Activated CD4-positive, alpha-beta memory T cell treated with anti-CD3 and anti-CD28 coated beads, Interleukin-2, amount 10 ng/mL, durations not matched to agents 7 days and 5 days (primary cell): ENCODE measurements at regions of chr16 and their contacts with region 1.

Region 1: DNA sequence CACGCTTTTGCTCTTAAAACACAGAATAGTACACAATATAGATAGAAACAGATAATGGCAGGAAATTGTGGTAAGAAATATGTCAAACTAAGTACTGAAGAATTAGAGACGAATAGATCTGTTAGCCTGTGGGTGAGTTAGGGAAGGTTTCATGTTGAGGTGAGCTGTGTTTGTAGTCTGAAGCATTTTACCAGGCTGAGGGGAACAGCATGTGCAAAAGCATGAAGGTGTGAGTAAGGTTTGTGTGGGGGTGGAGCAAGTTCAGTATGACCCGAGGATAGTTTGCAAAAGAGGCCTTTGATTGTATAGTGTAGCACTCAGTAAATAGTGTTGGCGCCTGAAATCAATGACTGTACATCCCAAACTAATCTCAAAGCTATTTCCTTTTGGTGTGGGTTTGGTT is 13.8 kb downstream of the IGSF6 start:
- DNase-seq: no peak
- H3K4me3 Mint-ChIP-seq: no peak overlapping the region
- H3K27ac Mint-ChIP-seq: peak overlapping the region; percentile 82
- H3K4me1 Mint-ChIP-seq: peaks cover 23% of the 10 kb centered on the region
- H3K27me3 Mint-ChIP-seq: no peaks in the 10 kb centered on the region

Region 2: GRCh38 chr16:21584817-21585216 is 53.8 kb before region 1 on chr16:
- CTCF ChIA-PET with region 1: interaction called, 48 read pairs
- POLR2A ChIA-PET with region 1: interaction called, 3 read pairs
- DNase-seq: no peak
- H3K4me3 Mint-ChIP-seq: no peak overlapping the region
- H3K27ac Mint-ChIP-seq: no peak overlapping the region
- H3K4me1 Mint-ChIP-seq: peaks cover 2% of the 10 kb centered on the region
- H3K27me3 Mint-ChIP-seq: no peaks in the 10 kb centered on the region

Region 3: GRCh38 chr16:21626659-21627277 is 11.8 kb before region 1 on chr16:
- CTCF ChIA-PET with region 1: interaction called, 5 read pairs
- POLR2A ChIA-PET with region 1: interaction called, 11 read pairs
- DNase-seq: peak; percentile 43
- H3K4me3 Mint-ChIP-seq: no peak overlapping the region
- H3K27ac Mint-ChIP-seq: peak overlapping the region; percentile 69
- H3K4me1 Mint-ChIP-seq: peaks cover 49% of the 10 kb centered on the region
- H3K27me3 Mint-ChIP-seq: no peaks in the 10 kb centered on the region

Region 4: DNA sequence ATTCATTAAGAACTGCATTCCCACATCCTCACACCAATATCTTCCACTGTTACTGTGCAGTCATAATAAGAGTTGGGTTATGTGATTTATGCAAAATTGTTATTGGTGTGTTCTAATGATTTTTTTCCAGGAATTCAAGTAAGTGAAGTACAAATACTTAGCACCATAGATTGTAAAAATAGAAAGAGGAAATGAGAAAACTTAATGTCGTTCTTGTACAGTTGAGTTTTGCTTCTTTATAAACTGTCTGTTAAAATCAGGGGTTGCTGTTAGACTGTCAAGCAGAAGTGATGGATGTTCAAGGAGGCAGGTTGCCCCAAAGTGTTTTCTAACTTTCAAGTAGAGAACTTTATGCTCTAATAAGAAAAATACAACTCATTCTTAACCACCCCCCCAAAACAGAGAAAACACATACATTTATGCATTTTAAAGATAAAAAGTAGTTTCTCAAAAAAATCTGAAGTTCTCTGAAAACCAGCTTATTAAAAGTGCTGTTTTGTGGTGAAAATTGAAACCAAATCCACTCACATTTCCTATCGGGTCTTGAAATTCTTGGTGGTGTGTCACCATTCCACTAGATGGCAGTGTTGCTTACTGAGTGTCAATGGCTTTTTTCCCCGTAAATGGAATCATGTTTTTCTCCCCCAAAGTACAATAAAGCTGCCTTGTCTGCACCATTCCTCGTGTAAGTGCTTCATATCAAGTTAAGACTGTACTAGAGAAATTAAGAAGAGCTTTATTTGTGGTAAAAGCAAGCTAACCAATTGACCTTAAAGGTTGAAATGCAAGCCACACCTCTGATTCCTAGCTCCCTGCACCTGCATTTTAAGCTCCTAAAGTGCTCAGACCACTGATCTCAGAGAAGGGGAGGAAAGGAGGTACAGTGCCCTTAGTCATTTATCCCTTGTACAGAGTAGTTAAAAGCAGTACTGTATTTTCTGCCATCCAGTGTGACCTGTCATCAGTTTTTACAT is 18.5 kb after region 1 on chr16:
- CTCF ChIA-PET with region 1: interaction called, 20 read pairs
- POLR2A ChIA-PET with region 1: no interaction called
- DNase-seq: peak; percentile 34
- H3K4me3 Mint-ChIP-seq: no peak overlapping the region
- H3K27ac Mint-ChIP-seq: no peak overlapping the region
- H3K4me1 Mint-ChIP-seq: peaks cover 45% of the 10 kb centered on the region
- H3K27me3 Mint-ChIP-seq: no peaks in the 10 kb centered on the region

Region 5: DNA sequence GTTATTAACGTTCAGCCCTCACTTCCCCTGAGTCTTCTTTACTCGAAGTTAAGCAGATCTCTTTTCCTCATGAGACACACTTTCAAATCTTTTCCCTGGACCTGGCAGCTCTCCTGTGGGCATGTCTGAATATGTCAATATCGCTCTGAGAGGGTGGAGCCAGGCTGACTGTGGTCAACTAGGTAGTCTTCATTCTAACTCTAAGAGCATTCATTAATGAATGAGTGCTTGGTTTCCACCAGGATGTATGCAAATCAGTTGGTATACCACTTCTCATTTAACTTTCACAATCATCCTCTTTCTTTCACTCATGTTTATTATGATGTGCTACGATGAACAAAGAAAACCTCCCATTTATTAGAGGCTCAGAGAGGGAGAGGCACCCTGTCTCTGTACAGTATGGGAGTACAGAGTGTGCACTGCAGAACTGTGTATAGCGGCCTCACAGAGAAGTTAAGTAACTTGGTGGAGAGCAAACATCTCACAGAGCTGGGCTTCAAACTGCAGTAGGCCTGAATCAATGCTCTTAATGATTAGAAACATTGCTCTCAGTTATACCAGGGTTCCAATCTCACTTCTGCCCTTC is 65.1 kb after region 1 on chr16:
- CTCF ChIA-PET with region 1: no interaction called
- POLR2A ChIA-PET with region 1: no interaction called
- DNase-seq: no peak
- H3K4me3 Mint-ChIP-seq: no peak overlapping the region
- H3K27ac Mint-ChIP-seq: no peak overlapping the region
- H3K4me1 Mint-ChIP-seq: peaks cover 12% of the 10 kb centered on the region
- H3K27me3 Mint-ChIP-seq: no peaks in the 10 kb centered on the region